ENCODE measurements at regions of chr5 and their contacts with region 1.

Region 1: DNA sequence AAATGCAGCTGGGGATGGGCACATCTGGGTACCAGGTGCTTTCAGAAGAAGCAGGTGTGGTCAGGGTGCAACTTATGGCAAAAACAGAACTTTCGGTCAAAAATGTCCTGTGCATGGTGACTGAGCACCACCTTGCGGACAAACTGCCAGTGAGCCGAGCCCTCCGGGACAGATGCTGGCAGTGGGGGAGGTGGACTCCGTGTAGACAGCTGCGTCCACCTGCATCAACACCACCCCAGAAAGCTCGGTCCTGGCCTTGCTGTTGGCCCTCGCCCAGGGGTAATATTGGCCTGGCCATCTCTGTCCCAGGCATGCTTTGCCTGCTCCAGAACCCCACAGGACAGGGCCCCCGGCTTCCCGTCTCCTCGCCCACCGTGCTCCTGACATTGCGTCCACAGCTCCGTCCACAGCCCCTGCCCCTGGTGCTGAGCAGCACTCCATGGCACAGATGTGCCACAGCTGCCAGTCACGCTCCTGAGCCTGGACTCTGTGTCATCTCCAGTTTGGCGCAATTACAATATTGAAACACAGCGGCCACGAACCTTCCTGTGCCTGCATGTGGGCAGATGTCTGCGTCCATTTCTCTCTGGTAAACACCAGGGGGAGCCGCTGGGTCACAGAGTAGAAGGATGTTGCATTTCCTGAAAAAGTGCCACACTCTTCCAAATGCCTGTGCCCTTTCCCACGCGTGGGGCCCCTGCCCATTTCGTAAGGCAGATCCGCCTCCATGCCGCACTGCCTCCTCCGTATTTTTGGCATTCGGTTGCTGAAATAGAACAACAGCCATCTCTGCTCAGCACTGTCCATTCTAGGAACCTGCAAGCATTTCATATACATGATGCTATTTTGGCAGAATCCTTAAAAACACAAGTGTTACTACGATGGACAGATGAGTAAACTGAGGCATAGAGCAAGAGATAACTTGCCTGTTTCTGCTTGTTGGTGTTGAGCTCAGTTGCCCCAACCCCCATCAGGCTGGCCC is 33.4 kb upstream of the SLC6A19 start:
- DNase-seq: peak; percentile 70 to 74
- H3K4me3 ChIP-seq: no peak overlapping the region
- H3K27ac ChIP-seq: no peak overlapping the region
- H3K4me1 ChIP-seq: peaks cover 4 to 19% of the 10 kb centered on the region in 2 donors
- H3K27me3 ChIP-seq: no peaks in the 10 kb centered on the region
- CTCF ChIP-seq: peak; percentile 49 to 74 (median 64)
- POLR2A ChIP-seq: no peak

Region 2: GRCh38 chr5:1080432-1080831 is 87.6 kb before region 1 on chr5:
- intact Hi-C with region 1: no loop called
- DNase-seq: no peak
- H3K4me3 ChIP-seq: no peak overlapping the region
- H3K27ac ChIP-seq: no peak overlapping the region
- H3K4me1 ChIP-seq: no peaks in the 10 kb centered on the region
- H3K27me3 ChIP-seq: no peaks in the 10 kb centered on the region
- CTCF ChIP-seq: no peak
- POLR2A ChIP-seq: no peak

Region 3: GRCh38 chr5:1641560-1642166 is 473.6 kb after region 1 on chr5:
- intact Hi-C with region 1: loop called (anchors 5 kb)
- DNase-seq: peak; percentile 86 to 90
- H3K4me3 ChIP-seq: no peak overlapping the region
- H3K27ac ChIP-seq: no peak overlapping the region
- H3K4me1 ChIP-seq: peaks cover 0 to 6% of the 10 kb centered on the region in 2 donors
- H3K27me3 ChIP-seq: peaks cover 10% of the 10 kb centered on the region
- CTCF ChIP-seq: peak; percentile 67 to 93 (median 85)
- POLR2A ChIP-seq: no peak

Measured in thyroid gland (tissue), 4 donors.